ENCODE measurements at regions of chr5 and their contacts with region 1.

Region 1: GRCh38 chr5:138491669-138492559 is 26.6 kb downstream of the EGR1 start:
- H3K4me3 Mint-ChIP-seq: peak overlapping the region; percentile 90
- H3K27ac Mint-ChIP-seq: peak overlapping the region; percentile 54
- H3K4me1 Mint-ChIP-seq: peaks cover 44% of the 10 kb centered on the region
- H3K27me3 Mint-ChIP-seq: peaks cover 49% of the 10 kb centered on the region

Region 2: GRCh38 chr5:138464008-138464387 is 27.9 kb before region 1 on chr5:
- intact Hi-C with region 1: loop called (anchors 1 kb)
- H3K4me3 Mint-ChIP-seq: peak overlapping the region; percentile 81
- H3K27ac Mint-ChIP-seq: peak overlapping the region; percentile 97
- H3K4me1 Mint-ChIP-seq: peaks cover 60% of the 10 kb centered on the region
- H3K27me3 Mint-ChIP-seq: peaks cover 27% of the 10 kb centered on the region

Region 3: GRCh38 chr5:138632900-138633489 is 141.1 kb after region 1 on chr5:
- intact Hi-C with region 1: no loop called
- H3K4me3 Mint-ChIP-seq: no peak overlapping the region
- H3K27ac Mint-ChIP-seq: no peak overlapping the region
- H3K4me1 Mint-ChIP-seq: peaks cover 6% of the 10 kb centered on the region
- H3K27me3 Mint-ChIP-seq: no peaks in the 10 kb centered on the region

Measured in dendritic cell treated with granulocyte-macrophage colony-stimulating factor and Interleukin-4, amounts not matched to agents 40 ng/mL and 50 ng/mL, for 4 days (primary cell).